Ovary (tissue), 10 donors: ENCODE measurements at regions of chr11 and their contacts with region 1.

Region 1: DNA sequence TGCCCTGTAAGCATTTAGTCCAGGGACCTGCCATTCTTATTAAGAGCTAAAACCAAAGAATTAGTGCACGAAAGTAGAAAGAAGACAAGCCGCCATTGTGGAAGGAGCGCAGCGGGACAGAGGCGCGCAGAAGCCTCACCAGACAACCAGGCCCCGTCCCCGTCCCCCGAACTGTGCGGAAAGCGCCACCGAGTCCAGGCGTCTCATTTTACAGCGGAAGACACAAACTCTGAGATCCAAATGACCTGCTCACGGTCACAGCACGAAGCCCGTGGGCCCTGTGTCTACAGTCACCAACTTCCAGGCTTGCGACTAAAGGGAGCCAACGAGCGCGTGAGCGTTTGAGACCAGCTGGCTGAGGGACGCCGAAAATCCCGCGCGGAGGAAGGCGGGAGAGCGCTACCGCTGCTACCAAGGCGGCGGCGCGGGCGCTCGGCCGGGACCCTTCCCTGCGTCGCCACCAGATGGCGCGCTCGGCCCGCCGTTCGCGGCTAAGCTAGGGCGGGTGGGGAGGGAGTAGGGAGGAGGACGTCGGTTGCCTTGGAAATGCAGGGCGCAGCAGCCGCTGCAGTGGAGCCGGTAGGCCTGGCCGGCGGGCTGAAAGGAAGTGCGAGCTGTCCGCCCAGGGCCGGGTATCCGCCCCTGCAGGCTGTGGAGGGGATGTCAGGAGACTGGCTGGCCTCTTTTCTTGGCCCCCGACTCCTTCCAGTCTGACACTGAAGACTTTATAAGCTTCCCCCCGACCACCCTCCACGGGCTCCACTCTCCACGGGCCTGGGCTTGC is 434 bp upstream of the CCDC83 start:
- DNase-seq: peak; percentile 87 to 95 (median 90)
- H3K4me3 ChIP-seq: peak overlapping the region; percentile 61
- H3K27ac ChIP-seq: peak overlapping the region; percentile 31 to 76
- H3K4me1 ChIP-seq: no peaks in the 10 kb centered on the region
- H3K27me3 ChIP-seq: no peaks in the 10 kb centered on the region
- CTCF ChIP-seq: peak; percentile 87 to 93 (median 90)
- EP300 ChIP-seq: no peak
- POLR2A ChIP-seq: no peak

Region 2: GRCh38 chr11:86193297-86194095 is 338.7 kb after region 1 on chr11:
- intact Hi-C with region 1: loop called in 1 of 4 experiments (anchors 10 kb)
- DNase-seq: peak in 4 of 5 donors; percentile 28 to 54 (median 46)
- H3K4me3 ChIP-seq: no peak overlapping the region
- H3K27ac ChIP-seq: no peak overlapping the region
- H3K4me1 ChIP-seq: peaks cover 6% of the 10 kb centered on the region
- H3K27me3 ChIP-seq: no peaks in the 10 kb centered on the region
- CTCF ChIP-seq: peak in 1 of 3 donors; percentile 17
- EP300 ChIP-seq: no peak
- POLR2A ChIP-seq: no peak

Region 3: GRCh38 chr11:86202013-86202336 is 347.2 kb after region 1 on chr11:
- intact Hi-C with region 1: loop called in 2 of 4 experiments (anchors 10 kb)
- DNase-seq: no peak
- H3K4me3 ChIP-seq: peak overlapping the region; percentile 0
- H3K27ac ChIP-seq: no peak overlapping the region
- H3K4me1 ChIP-seq: peaks cover 2% of the 10 kb centered on the region
- H3K27me3 ChIP-seq: no peaks in the 10 kb centered on the region
- CTCF ChIP-seq: no peak
- EP300 ChIP-seq: no peak
- POLR2A ChIP-seq: no peak

Region 4: DNA sequence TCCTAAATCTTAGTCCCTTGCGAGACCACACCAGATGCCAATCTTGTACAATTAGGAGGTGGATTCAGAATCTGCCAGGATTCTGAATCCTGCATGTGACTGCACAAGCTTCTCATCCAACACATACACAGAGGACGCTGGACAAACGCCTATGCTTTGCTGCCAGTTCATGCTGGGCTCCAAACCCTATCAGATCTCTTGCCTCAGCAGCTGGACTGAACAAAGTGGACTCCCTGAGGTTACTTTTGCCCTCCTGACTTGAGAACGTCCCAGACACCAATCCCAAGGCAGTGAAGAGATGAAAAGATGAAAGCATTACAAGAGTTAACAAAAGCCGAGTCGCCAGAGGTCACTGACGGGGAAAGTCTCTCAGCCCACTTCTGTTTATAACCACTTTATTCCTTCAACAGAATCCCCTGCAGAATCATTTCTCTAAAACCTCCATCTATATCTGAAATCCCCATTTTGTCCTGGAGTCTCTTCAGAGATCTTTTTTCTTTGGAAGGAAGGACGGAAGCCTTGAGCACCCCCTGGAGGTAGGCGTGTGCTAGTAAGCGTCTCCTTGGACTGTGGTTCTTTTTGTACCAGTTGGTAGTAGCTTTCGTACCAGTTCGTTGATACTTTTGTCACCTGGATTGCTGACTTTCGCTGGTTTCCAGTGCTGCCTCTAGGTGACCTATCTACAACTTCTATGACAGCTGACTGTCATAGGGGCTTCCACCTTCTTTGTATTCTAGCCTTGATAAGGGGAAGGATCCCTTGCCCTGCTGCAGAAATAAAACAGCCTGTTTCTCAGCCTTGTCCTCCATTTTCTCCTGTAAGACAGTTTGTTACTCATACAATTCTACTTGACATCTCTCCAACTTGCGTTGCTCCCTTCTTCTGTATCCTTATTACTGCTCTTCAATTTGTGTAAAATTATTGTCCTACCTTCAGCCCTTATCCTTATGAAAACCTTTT is 363.7 kb after region 1 on chr11:
- intact Hi-C with region 1: loop called in 1 of 4 experiments (anchors 10 kb)
- DNase-seq: peak; percentile 59 to 78 (median 77)
- H3K4me3 ChIP-seq: no peak overlapping the region
- H3K27ac ChIP-seq: no peak overlapping the region
- H3K4me1 ChIP-seq: no peaks in the 10 kb centered on the region
- H3K27me3 ChIP-seq: no peaks in the 10 kb centered on the region
- CTCF ChIP-seq: peak; percentile 71 to 85 (median 74)
- EP300 ChIP-seq: no peak
- POLR2A ChIP-seq: no peak

Region 5: DNA sequence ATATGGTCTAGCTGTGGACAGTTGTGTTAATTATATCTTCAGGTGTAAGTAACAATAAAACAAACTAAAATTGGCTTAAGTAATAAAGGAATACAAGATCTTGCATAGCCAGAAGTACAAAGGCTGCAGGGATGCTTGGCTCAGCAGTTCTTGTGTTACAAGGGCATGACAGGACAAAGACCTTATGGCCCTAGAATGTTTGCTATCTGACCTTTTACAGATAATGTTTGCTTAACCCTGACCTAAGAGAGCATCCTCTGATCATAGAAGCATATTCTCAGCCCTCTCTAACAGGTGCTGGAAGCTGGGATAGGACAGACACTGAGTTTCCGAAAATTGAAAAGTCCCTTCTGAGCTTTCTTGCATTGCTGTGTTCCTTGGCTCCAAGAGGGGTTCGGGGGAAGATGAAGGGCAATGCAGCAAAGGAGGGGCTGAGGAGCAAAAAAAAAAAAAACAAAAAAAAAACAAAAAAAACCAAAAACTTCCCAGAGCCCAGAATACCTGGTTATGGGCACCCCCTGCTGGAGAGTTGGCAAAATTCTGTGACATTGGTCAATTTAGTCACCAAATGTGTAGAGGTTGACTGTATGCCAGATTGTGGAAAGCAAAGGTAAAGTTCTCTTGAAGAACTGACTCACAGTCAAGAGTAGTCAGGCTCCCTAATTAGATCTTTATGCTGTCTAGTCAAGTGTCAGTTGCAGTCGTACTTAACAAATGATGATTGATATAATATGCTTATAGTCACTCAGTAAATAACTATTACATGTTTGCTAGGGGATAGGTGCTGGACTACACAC is 436.9 kb after region 1 on chr11:
- intact Hi-C with region 1: loop called in 1 of 4 experiments (anchors 5 kb)
- DNase-seq: peak in 4 of 5 donors; percentile 15 to 68 (median 49)
- H3K4me3 ChIP-seq: no peak overlapping the region
- H3K27ac ChIP-seq: no peak overlapping the region
- H3K4me1 ChIP-seq: no peaks in the 10 kb centered on the region
- H3K27me3 ChIP-seq: no peaks in the 10 kb centered on the region
- CTCF ChIP-seq: peak; percentile 29 to 55 (median 36)
- EP300 ChIP-seq: no peak
- POLR2A ChIP-seq: no peak